A673 (cell line): ENCODE measurements at regions of chr2 and their contacts with region 1.

Region 1: GRCh38 chr2:64914735-64915509 is 74.3 kb upstream of the SLC1A4 start:
- DNase-seq: no peak
- H3K4me3 ChIP-seq: no peak overlapping the region
- H3K27ac ChIP-seq: no peak overlapping the region
- H3K4me1 ChIP-seq: peaks cover 18% of the 10 kb centered on the region
- H3K27me3 ChIP-seq: no peaks in the 10 kb centered on the region
- CTCF ChIP-seq: no peak

Region 2: DNA sequence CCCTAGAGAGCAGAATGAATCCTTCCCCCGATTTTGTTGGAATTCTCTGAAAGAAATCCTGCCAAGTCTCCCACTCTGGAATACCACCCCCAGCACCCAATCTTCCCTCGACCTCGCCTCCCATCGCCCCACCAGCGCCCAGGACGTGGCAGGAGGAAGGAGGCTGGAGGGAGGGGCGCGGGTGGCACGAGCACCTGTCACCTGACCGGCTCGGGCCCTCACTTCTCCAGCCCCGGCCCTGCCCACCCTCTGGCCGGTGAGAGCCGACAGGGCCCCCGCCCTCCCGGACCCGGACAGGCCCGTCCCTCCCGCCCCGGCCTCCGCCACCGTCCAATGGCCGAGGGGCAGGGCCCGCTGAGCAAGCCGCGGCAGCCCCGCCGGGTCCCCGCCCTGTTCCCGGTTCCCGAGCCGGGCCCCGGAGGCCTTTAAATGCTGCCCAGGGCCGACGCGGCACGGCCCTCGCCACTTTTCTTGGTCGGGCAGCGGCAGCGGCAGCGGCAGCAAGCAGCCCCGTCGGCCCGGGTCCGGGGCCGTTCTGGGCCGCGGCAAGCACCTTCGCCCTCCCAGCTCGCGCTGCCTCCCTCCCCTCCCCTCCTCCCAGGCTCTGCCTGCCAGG is 461.0 kb before region 1 on chr2 and contains the start of gene LGALSL:
- CTCF ChIA-PET with region 1: interaction called, 13 read pairs
- POLR2A ChIA-PET with region 1: no interaction called
- intact Hi-C with region 1: no loop called
- DNase-seq: no peak
- H3K4me3 ChIP-seq: peak within 1 kb of the TSS; percentile 76
- H3K27ac ChIP-seq: peak within 1 kb of the TSS; percentile 67
- H3K4me1 ChIP-seq: peaks cover 12% of the 10 kb centered on the region
- H3K27me3 ChIP-seq: no peaks in the 10 kb centered on the region
- CTCF ChIP-seq: no peak
- total RNA-seq, gene LGALSL: 5.9 and 7.4 TPM in 2 replicates

Region 3: GRCh38 chr2:64932371-64933216 is 17.7 kb after region 1 on chr2:
- CTCF ChIA-PET with region 1: no interaction called
- POLR2A ChIA-PET with region 1: no interaction called
- intact Hi-C with region 1: no loop called
- DNase-seq: no peak
- H3K4me3 ChIP-seq: no peak overlapping the region
- H3K27ac ChIP-seq: no peak overlapping the region
- H3K4me1 ChIP-seq: no peaks in the 10 kb centered on the region
- H3K27me3 ChIP-seq: peaks cover 6% of the 10 kb centered on the region
- CTCF ChIP-seq: no peak

Region 4: DNA sequence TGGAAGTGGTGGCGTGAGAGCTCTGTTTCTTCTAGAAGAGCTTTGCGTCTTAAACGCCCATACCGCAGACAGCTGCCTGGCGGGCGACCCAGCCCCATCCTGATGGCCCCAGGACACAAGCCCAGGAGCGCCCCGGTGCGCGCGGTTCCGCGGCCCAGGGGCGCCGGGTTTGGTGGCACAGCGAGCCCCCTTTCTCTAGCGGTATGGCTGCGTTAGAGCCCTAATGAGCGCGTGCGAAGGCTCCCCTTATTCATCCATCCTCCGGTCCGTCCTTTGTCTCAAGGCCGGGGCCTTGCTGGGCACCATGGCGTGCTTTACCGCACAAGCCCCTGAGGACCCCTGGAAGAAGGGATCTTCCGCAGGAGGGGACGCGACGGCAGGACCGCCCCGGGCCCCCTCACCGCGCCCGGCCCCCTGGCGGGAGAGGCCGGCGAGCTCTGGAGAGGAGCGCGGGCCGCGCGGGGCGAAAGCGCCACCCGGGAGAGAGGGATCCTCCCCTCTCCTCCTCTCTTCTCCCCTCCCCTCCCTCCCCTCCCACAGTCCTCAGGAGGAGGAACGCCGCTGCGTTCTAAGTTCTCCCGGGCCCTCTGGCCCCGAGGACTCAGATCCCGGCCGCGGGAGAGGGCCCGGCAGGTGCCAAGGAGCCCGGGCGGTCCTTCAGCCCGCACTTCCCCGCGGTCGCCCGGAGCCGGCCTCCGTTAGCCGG is 73.7 kb after region 1 on chr2:
- CTCF ChIA-PET with region 1: interaction called, 4 read pairs
- POLR2A ChIA-PET with region 1: no interaction called
- intact Hi-C with region 1: loop called (anchors 1 kb)
- DNase-seq: peak; percentile 92
- H3K4me3 ChIP-seq: peak overlapping the region; percentile 97
- H3K27ac ChIP-seq: peak overlapping the region; percentile 97
- H3K4me1 ChIP-seq: peaks cover 26% of the 10 kb centered on the region
- H3K27me3 ChIP-seq: no peaks in the 10 kb centered on the region
- CTCF ChIP-seq: 0 out of 2 replicates have a peak, but pooled peaks have one; percentile 22

Region 5: GRCh38 chr2:65031341-65032018 is 116.6 kb after region 1 on chr2:
- CTCF ChIA-PET with region 1: interaction called, 28 read pairs
- POLR2A ChIA-PET with region 1: no interaction called
- intact Hi-C with region 1: no loop called
- DNase-seq: peak; percentile 61
- H3K4me3 ChIP-seq: no peak overlapping the region
- H3K27ac ChIP-seq: no peak overlapping the region
- H3K4me1 ChIP-seq: peaks cover 26% of the 10 kb centered on the region
- H3K27me3 ChIP-seq: no peaks in the 10 kb centered on the region
- CTCF ChIP-seq: no peak

Region 6: GRCh38 chr2:65040400-65041261 is 125.7 kb after region 1 on chr2:
- CTCF ChIA-PET with region 1: interaction called, 18 read pairs
- POLR2A ChIA-PET with region 1: no interaction called
- intact Hi-C with region 1: loop called (anchors 1 kb)
- DNase-seq: peak; percentile 88
- H3K4me3 ChIP-seq: no peak overlapping the region
- H3K27ac ChIP-seq: no peak overlapping the region
- H3K4me1 ChIP-seq: peaks cover 6% of the 10 kb centered on the region
- H3K27me3 ChIP-seq: no peaks in the 10 kb centered on the region
- CTCF ChIP-seq: peak; percentile 95

Region 7: GRCh38 chr2:65576861-65577601 is 662.1 kb after region 1 on chr2:
- CTCF ChIA-PET with region 1: interaction called, 3 read pairs
- POLR2A ChIA-PET with region 1: no interaction called
- intact Hi-C with region 1: loop called (anchors 5 kb)
- DNase-seq: peak; percentile 86
- H3K4me3 ChIP-seq: no peak overlapping the region
- H3K27ac ChIP-seq: peak overlapping the region; percentile 39
- H3K4me1 ChIP-seq: peaks cover 16% of the 10 kb centered on the region
- H3K27me3 ChIP-seq: no peaks in the 10 kb centered on the region
- CTCF ChIP-seq: no peak